ENCODE measurements at regions of chr17 and their contacts with region 1.

Region 1: GRCh38 chr17:78013683-78014467 is 55.4 kb downstream of the TNRC6C start:
- DNase-seq: peak; percentile 69
- ATAC-seq: peak; percentile 65
- H3K4me3 Mint-ChIP-seq: no peak overlapping the region
- H3K27ac Mint-ChIP-seq: no peak overlapping the region
- H3K4me1 Mint-ChIP-seq: peaks cover 25% of the 10 kb centered on the region
- H3K27me3 Mint-ChIP-seq: no peaks in the 10 kb centered on the region
- CTCF ChIP-seq: peak; percentile 92

Region 2: GRCh38 chr17:77542551-77543490 is 471.1 kb before region 1 on chr17:
- CTCF ChIA-PET with region 1: interaction called, 21 read pairs
- POLR2A ChIA-PET with region 1: no interaction called
- intact Hi-C with region 1: loop called (anchors 10 kb)
- DNase-seq: peak; percentile 80
- ATAC-seq: peak; percentile 94
- H3K4me3 Mint-ChIP-seq: no peak overlapping the region
- H3K27ac Mint-ChIP-seq: no peak overlapping the region
- H3K4me1 Mint-ChIP-seq: no peaks in the 10 kb centered on the region
- H3K27me3 Mint-ChIP-seq: no peaks in the 10 kb centered on the region
- CTCF ChIP-seq: peak; percentile 93

Region 3: GRCh38 chr17:77772461-77772897 is 241.4 kb before region 1 on chr17:
- CTCF ChIA-PET with region 1: interaction called, 37 read pairs
- POLR2A ChIA-PET with region 1: interaction called, 3 read pairs
- intact Hi-C with region 1: loop called (anchors 5 kb)
- DNase-seq: peak; percentile 78
- ATAC-seq: peak; percentile 97
- H3K4me3 Mint-ChIP-seq: no peak overlapping the region
- H3K27ac Mint-ChIP-seq: no peak overlapping the region
- H3K4me1 Mint-ChIP-seq: peaks cover 12% of the 10 kb centered on the region
- H3K27me3 Mint-ChIP-seq: no peaks in the 10 kb centered on the region
- CTCF ChIP-seq: peak; percentile 76

Region 4: DNA sequence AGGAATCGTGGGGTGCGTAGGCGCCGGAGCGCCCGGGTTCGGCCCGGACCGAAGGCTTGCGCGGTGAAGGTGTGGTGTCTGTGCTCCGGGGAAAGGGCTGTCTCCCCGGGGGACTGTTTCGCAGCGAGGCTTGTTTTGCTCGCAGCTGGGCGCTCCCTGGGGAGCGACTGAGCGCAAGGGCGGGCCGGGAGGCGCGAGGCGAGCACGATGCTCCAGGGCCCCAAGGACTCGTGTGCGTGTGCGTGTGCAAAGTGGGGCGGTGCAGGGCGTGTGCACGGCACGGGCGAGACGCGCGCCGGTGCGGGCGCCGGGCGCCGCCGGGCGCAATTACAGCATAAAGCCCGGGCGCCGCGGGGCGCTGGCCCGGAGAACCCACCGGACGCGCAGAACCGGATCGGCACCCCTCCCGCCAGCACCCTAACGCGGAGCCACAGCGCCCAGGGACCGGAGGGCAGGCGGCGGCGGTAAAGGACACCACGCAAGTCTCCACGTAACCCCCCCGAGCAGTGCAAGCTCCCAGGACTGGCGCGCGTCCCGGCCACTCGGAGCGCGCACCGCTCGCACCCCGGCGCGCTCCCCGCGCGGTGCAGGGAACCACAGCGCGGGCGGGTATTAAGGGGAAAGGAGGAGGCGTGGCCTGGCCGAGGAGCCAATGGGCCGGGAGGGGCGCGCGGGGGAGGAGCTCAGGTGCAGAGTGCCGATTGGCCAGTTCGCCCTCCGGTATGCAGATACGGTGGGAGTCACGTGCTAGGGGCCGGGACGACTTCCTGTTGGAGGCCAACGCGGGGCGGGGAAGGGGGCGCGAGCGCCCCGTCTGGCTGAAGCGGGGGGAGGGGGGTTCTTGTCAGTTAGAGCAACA is 55.8 kb before region 1 on chr17 and contains the start of gene TNRC6C:
- CTCF ChIA-PET with region 1: interaction called, 17 read pairs
- POLR2A ChIA-PET with region 1: interaction called, 5 read pairs
- intact Hi-C with region 1: loop called (anchors 5 kb)
- DNase-seq: peak; percentile 100
- ATAC-seq: peak; percentile 92
- H3K4me3 Mint-ChIP-seq: peak within 1 kb of the TSS; percentile 85
- H3K27ac Mint-ChIP-seq: peak within 1 kb of the TSS; percentile 90
- H3K4me1 Mint-ChIP-seq: peaks cover 34% of the 10 kb centered on the region
- H3K27me3 Mint-ChIP-seq: peaks cover 7% of the 10 kb centered on the region
- CTCF ChIP-seq: no peak
- total RNA-seq, gene TNRC6C: 26.4 to 26.6 TPM

Region 5: GRCh38 chr17:77968788-77969187 is 45.1 kb before region 1 on chr17:
- CTCF ChIA-PET with region 1: interaction called, 22 read pairs
- POLR2A ChIA-PET with region 1: interaction called, 3 read pairs
- intact Hi-C with region 1: loop called (anchors 5 kb)
- DNase-seq: no peak
- ATAC-seq: no peak
- H3K4me3 Mint-ChIP-seq: no peak overlapping the region
- H3K27ac Mint-ChIP-seq: no peak overlapping the region
- H3K4me1 Mint-ChIP-seq: peaks cover 82% of the 10 kb centered on the region
- H3K27me3 Mint-ChIP-seq: no peaks in the 10 kb centered on the region
- CTCF ChIP-seq: no peak

Region 6: GRCh38 chr17:78026381-78026780 is 12.5 kb after region 1 on chr17:
- CTCF ChIA-PET with region 1: interaction called, 45 read pairs
- POLR2A ChIA-PET with region 1: no interaction called
- intact Hi-C with region 1: no loop called
- DNase-seq: no peak
- ATAC-seq: no peak
- H3K4me3 Mint-ChIP-seq: no peak overlapping the region
- H3K27ac Mint-ChIP-seq: no peak overlapping the region
- H3K4me1 Mint-ChIP-seq: peaks cover 26% of the 10 kb centered on the region
- H3K27me3 Mint-ChIP-seq: no peaks in the 10 kb centered on the region
- CTCF ChIP-seq: no peak

Region 7: DNA sequence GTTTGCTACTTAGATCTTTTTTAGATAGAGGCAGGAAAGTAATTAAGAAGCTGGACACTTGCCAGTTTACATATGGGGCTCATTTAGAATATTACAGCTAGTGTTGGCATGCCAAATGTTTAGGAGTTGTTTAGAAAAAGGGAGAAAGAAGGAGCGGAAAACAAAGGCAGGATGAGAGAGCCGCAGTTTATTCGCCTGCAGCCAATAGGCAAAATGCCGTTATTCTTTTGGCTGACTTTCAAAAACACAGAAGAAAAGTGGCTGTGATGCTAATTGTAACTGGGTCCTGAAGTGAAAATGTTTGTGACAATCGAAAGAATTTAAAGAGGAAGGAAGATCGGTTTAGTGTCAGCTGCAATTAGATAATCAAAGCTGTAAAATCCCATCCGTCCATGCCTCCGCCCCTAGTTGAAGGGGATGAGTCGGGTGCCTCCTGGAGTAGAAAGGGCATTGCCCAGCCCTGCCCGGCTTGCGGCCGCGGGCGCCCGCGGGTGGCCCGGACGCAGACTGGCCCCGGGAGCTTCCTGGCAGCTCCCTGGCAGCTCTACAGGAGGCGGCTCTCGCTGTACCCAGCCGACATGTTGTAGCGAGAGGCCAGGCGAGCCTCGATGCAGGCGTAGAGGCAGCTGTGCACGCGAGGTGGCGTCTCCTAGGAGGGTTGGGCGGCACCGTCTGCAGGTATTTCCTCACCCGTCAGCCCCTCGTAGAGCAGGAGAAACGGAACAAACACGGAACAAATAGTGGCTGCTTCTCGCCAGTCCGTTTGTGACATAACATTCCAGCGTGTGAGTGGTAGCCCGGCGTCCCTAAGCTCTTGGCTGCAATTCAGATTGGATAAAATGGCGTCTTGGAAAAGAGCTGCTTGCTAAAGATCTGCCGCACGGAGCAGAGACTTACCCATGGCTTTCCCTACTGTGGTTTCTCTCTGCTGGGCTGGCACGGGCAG is 26.8 kb after region 1 on chr17:
- CTCF ChIA-PET with region 1: interaction called, 26 read pairs
- POLR2A ChIA-PET with region 1: no interaction called
- intact Hi-C with region 1: no loop called
- DNase-seq: peak; percentile 25
- ATAC-seq: peak; percentile 65
- H3K4me3 Mint-ChIP-seq: peak overlapping the region; percentile 64
- H3K27ac Mint-ChIP-seq: peak overlapping the region; percentile 5
- H3K4me1 Mint-ChIP-seq: peaks cover 25% of the 10 kb centered on the region
- H3K27me3 Mint-ChIP-seq: no peaks in the 10 kb centered on the region
- CTCF ChIP-seq: no peak

Region 8: GRCh38 chr17:78517421-78517820 is 503.5 kb after region 1 on chr17:
- CTCF ChIA-PET with region 1: no interaction called
- POLR2A ChIA-PET with region 1: no interaction called
- intact Hi-C with region 1: no loop called
- DNase-seq: no peak
- ATAC-seq: no peak
- H3K4me3 Mint-ChIP-seq: no peak overlapping the region
- H3K27ac Mint-ChIP-seq: no peak overlapping the region
- H3K4me1 Mint-ChIP-seq: no peaks in the 10 kb centered on the region
- H3K27me3 Mint-ChIP-seq: no peaks in the 10 kb centered on the region
- CTCF ChIP-seq: no peak

Measured in activated CD8-positive, alpha-beta T cell treated with anti-CD3 and anti-CD28 coated beads for 36 hours (primary cell).